CD8-positive, alpha-beta T cell (primary cell): ENCODE measurements at regions of chr16 and their contacts with region 1.

Region 1: GRCh38 chr16:1610276-1611017 is 1.4 kb downstream of the IFT140 start:
- DNase-seq: peak; percentile 85 to 94 (median 92)
- ATAC-seq: peak; percentile 56
- H3K4me3 ChIP-seq: peak overlapping the region; percentile 48 to 83
- H3K4me3 Mint-ChIP-seq: peak overlapping the region; percentile 83
- H3K27ac ChIP-seq: peak overlapping the region; percentile 48 to 64
- H3K27ac Mint-ChIP-seq: peak overlapping the region; percentile 49
- H3K4me1 ChIP-seq: peaks cover 34% of the 10 kb centered on the region
- H3K4me1 Mint-ChIP-seq: peaks cover 25% of the 10 kb centered on the region
- H3K27me3 ChIP-seq: peaks cover 2 to 4% of the 10 kb centered on the region in 2 experiments
- H3K27me3 Mint-ChIP-seq: peaks cover 6% of the 10 kb centered on the region
- CTCF ChIP-seq: no peak

Region 2: GRCh38 chr16:1351582-1352362 is 258.7 kb before region 1 on chr16 and contains the starts of genes GNPTG and TSR3:
- CTCF ChIA-PET with region 1: no interaction called
- POLR2A ChIA-PET with region 1: no interaction called
- intact Hi-C with region 1: loop called in 1 of 2 experiments (anchors 10 kb)
- DNase-seq: peak; percentile 68 to 95 (median 82)
- ATAC-seq: peak; percentile 87
- H3K4me3 ChIP-seq: peak within 1 kb of the TSS; percentile 76 to 84
- H3K4me3 Mint-ChIP-seq: peak within 1 kb of the TSS; percentile 82
- H3K27ac ChIP-seq: peak within 1 kb of the TSS; percentile 39 to 50
- H3K27ac Mint-ChIP-seq: peak within 1 kb of the TSS; percentile 72
- H3K4me1 ChIP-seq: peaks cover 24% of the 10 kb centered on the region
- H3K4me1 Mint-ChIP-seq: peaks cover 35% of the 10 kb centered on the region
- H3K27me3 ChIP-seq: no peaks in the 10 kb centered on the region
- H3K27me3 Mint-ChIP-seq: no peaks in the 10 kb centered on the region
- CTCF ChIP-seq: no peak
- total RNA-seq, gene GNPTG: 30.7 to 31.9 TPM
- total RNA-seq, gene TSR3: 21.6 to 22.7 TPM

Region 3: DNA sequence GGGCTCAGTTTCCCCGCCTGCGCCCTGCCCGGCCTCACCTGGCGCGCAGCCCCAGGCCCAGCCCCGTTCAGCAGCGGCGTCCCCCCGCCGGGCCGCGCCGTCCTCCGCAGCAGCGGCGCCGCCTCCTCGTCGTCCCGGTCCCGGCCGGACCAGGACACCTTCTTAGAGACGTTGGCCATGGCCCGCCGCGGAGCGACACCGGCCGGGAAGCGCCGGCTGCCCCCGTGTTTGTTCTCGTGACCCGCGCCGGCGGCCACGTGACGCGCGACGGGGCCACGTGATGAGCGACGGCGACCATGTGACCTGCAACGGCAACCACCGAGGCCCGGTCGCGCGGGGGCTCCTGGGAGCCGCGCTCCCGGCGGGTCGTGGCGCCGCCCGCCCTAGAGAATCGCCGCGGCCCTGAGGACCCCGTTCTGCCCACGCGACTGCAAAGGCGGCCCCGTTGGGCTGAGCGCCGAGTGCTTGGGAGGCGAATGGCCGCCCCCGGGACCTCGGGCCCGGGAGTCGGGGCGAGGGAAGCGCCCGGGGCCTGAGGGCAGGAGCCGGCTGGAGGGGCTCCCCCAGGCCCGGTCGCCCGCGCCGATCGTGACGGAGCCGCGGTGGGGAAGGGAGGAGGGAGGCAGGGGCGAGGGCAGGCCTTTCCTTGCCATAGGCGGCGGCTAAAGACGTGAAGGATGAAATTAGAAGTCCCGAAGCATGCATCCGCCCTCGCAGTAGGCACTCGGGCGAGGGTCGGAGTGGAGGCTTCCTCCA is 135.5 kb before region 1 on chr16 and contains the start of gene CLCN7:
- CTCF ChIA-PET with region 1: no interaction called
- POLR2A ChIA-PET with region 1: no interaction called
- intact Hi-C with region 1: loop called in 1 of 2 experiments (anchors 1 kb)
- DNase-seq: peak; percentile 58 to 93 (median 87)
- ATAC-seq: peak; percentile 82
- H3K4me3 ChIP-seq: peak within 1 kb of the TSS; percentile 60 to 84
- H3K4me3 Mint-ChIP-seq: peak within 1 kb of the TSS; percentile 83
- H3K27ac ChIP-seq: peak within 1 kb of the TSS; percentile 75 to 81
- H3K27ac Mint-ChIP-seq: peak within 1 kb of the TSS; percentile 90
- H3K4me1 ChIP-seq: peaks cover 31% of the 10 kb centered on the region
- H3K4me1 Mint-ChIP-seq: peaks cover 40% of the 10 kb centered on the region
- H3K27me3 ChIP-seq: no peaks in the 10 kb centered on the region
- H3K27me3 Mint-ChIP-seq: no peaks in the 10 kb centered on the region
- CTCF ChIP-seq: no peak
- total RNA-seq, gene CLCN7: 85.7 to 90.0 TPM

Region 4: GRCh38 chr16:1543085-1543896 is 67.2 kb before region 1 on chr16:
- CTCF ChIA-PET with region 1: no interaction called
- POLR2A ChIA-PET with region 1: no interaction called
- intact Hi-C with region 1: loop called in 1 of 2 experiments (anchors 5 kb)
- DNase-seq: peak in 5 of 9 experiments; percentile 42 to 65 (median 48)
- ATAC-seq: peak; percentile 68
- H3K4me3 ChIP-seq: no peak overlapping the region
- H3K4me3 Mint-ChIP-seq: peak overlapping the region; percentile 44
- H3K27ac ChIP-seq: peak overlapping the region; percentile 4 to 44
- H3K27ac Mint-ChIP-seq: peak overlapping the region; percentile 76
- H3K4me1 ChIP-seq: peaks cover 93% of the 10 kb centered on the region
- H3K4me1 Mint-ChIP-seq: peaks cover 71% of the 10 kb centered on the region
- H3K27me3 ChIP-seq: no peaks in the 10 kb centered on the region
- H3K27me3 Mint-ChIP-seq: no peaks in the 10 kb centered on the region
- CTCF ChIP-seq: no peak

Region 5: GRCh38 chr16:1705688-1706385 is 95.4 kb after region 1 on chr16 and contains the start of gene MAPK8IP3:
- CTCF ChIA-PET with region 1: no interaction called
- POLR2A ChIA-PET with region 1: interaction called, 5 read pairs
- intact Hi-C with region 1: loop called (anchors 1 kb)
- DNase-seq: peak; percentile 88 to 99 (median 95)
- ATAC-seq: peak; percentile 74
- H3K4me3 ChIP-seq: peak within 1 kb of the TSS; percentile 94 to 99
- H3K4me3 Mint-ChIP-seq: peak within 1 kb of the TSS; percentile 99
- H3K27ac ChIP-seq: peak within 1 kb of the TSS; percentile 83 to 90
- H3K27ac Mint-ChIP-seq: peak within 1 kb of the TSS; percentile 97
- H3K4me1 ChIP-seq: peaks cover 32% of the 10 kb centered on the region
- H3K4me1 Mint-ChIP-seq: peaks cover 43% of the 10 kb centered on the region
- H3K27me3 ChIP-seq: no peaks in the 10 kb centered on the region
- H3K27me3 Mint-ChIP-seq: no peaks in the 10 kb centered on the region
- CTCF ChIP-seq: peak; percentile 92
- total RNA-seq, gene MAPK8IP3: 381 to 419 TPM

Region 6: GRCh38 chr16:1929578-1930337 is 319.3 kb after region 1 on chr16:
- CTCF ChIA-PET with region 1: no interaction called
- POLR2A ChIA-PET with region 1: no interaction called
- intact Hi-C with region 1: no loop called
- DNase-seq: peak; percentile 85 to 97 (median 92)
- ATAC-seq: peak; percentile 100
- H3K4me3 ChIP-seq: peak overlapping the region; percentile 41
- H3K4me3 Mint-ChIP-seq: peak overlapping the region; percentile 82
- H3K27ac ChIP-seq: no peak overlapping the region
- H3K27ac Mint-ChIP-seq: no peak overlapping the region
- H3K4me1 ChIP-seq: no peaks in the 10 kb centered on the region
- H3K4me1 Mint-ChIP-seq: peaks cover 2% of the 10 kb centered on the region
- H3K27me3 ChIP-seq: peaks cover 0 to 3% of the 10 kb centered on the region in 2 experiments
- H3K27me3 Mint-ChIP-seq: no peaks in the 10 kb centered on the region
- CTCF ChIP-seq: peak; percentile 99

Region 7: DNA sequence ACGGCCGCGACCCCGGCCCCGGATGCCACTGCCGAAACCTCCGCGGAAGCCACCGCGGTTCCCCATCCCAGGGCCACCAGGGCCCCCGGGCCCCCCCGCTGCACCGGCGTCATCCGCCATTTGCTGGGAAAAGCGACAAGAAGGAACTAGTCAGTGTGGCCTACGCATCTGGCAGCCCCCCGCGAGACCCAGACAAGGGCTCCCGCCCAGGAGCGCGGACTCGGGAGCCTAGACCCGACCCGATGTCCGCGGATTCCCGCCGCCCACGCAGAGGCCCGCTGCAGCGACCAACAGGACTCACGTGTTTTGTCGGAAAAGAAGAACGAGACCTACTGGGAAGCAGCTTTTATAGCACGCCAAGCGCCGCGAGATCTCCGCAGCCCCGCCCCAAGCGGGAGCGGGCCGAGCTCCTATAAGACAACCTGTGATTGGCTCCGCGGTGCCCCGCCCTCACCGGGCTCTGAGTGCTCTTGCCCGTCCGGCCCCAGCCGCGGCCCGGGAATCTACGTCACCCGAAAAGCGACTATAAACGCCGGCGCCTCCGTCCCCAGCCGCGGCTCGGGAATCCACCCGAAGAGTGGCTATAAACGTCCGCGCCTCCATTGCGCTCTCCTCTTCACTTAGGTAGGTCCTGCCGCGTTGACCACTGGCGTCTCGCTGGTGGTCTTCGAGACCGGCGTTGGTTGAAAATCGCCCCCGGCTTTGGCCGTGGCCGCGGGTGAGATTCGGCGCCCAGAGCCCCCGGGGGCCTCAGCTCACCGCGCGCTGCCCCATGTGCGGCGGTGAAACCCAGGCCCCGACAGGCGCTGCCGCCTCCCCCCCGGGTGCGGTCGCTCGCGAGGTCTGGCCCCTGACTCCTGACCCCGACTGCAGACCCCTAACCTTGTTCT is 354.3 kb after region 1 on chr16 and contains the start of gene RPS2:
- CTCF ChIA-PET with region 1: no interaction called
- POLR2A ChIA-PET with region 1: no interaction called
- intact Hi-C with region 1: loop called in 1 of 2 experiments (anchors 10 kb)
- DNase-seq: peak; percentile 92 to 99 (median 98)
- ATAC-seq: peak; percentile 89
- H3K4me3 ChIP-seq: peak within 1 kb of the TSS; percentile 82 to 99
- H3K4me3 Mint-ChIP-seq: peak within 1 kb of the TSS; percentile 94
- H3K27ac ChIP-seq: peak within 1 kb of the TSS; percentile 98 to 99
- H3K27ac Mint-ChIP-seq: peak within 1 kb of the TSS; percentile 96
- H3K4me1 ChIP-seq: peaks cover 41% of the 10 kb centered on the region
- H3K4me1 Mint-ChIP-seq: peaks cover 45% of the 10 kb centered on the region
- H3K27me3 ChIP-seq: no peaks in the 10 kb centered on the region
- H3K27me3 Mint-ChIP-seq: no peaks in the 10 kb centered on the region
- CTCF ChIP-seq: no peak
- total RNA-seq, gene RPS2: 4,060 to 4,094 TPM